ENCODE measurements at regions of chr2 and their contacts with region 1.

Region 1: GRCh38 chr2:240434728-240435456 is 571 bp upstream of the GPC1 start:
- DNase-seq: peak; percentile 94
- ATAC-seq: peak; percentile 90
- H3K4me3 Mint-ChIP-seq: peak overlapping the region; percentile 85
- H3K27ac Mint-ChIP-seq: peak overlapping the region; percentile 46
- H3K4me1 Mint-ChIP-seq: peaks cover 11% of the 10 kb centered on the region
- H3K27me3 Mint-ChIP-seq: peaks cover 11% of the 10 kb centered on the region
- CTCF ChIP-seq: no peak

Region 2: DNA sequence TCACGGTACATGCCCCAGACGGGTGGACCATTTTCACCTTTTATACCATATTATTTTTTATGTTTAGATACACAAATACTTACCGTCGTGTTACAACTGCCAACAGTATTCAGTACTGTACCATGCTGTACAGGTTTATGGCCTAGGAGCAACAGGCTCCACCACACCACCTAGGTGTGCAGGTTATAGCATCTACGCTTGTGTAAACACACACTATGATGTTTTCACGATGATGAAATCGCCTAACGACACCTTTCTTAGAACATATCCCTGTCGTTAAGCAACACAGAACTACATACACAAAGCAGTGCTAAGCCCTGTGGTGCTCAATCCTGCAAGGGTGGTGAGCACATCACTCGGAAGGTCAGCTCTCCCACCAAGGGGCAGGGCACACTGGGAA is 434.2 kb before region 1 on chr2:
- CTCF ChIA-PET with region 1: no interaction called
- POLR2A ChIA-PET with region 1: no interaction called
- intact Hi-C with region 1: no loop called
- DNase-seq: no peak
- ATAC-seq: no peak
- H3K4me3 Mint-ChIP-seq: no peak overlapping the region
- H3K27ac Mint-ChIP-seq: no peak overlapping the region
- H3K4me1 Mint-ChIP-seq: no peaks in the 10 kb centered on the region
- H3K27me3 Mint-ChIP-seq: no peaks in the 10 kb centered on the region
- CTCF ChIP-seq: no peak

Region 3: DNA sequence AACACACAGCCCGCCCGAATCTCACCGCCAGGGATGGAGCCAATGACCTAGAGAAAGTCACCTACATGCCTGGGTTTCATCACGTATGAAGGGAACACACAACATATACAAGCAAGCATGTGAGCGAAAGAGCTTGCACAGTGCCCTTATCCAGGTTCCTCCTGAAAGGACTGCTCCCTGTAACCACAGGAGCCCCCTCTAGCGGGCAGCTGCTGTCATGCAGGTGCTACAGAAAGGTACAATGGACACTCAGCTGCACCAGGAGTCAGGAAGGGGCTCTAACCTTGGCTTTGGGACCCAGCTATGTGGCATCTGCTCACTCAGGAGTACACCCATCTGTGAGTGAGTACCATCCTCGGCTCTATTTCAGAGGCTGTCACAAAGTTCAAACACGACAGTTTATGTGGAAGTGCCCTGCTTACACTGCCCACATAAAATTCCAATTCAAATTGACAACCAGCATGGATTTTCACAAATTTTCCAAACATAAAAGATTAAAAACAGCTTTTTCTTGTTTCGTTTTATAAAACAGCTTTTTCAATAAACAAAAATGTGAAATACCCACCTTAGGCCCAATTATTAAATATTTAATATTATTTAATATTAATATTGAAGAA is 413.3 kb before region 1 on chr2:
- CTCF ChIA-PET with region 1: no interaction called
- POLR2A ChIA-PET with region 1: no interaction called
- intact Hi-C with region 1: loop called (anchors 1 kb)
- DNase-seq: peak; percentile 50
- ATAC-seq: peak; percentile 23
- H3K4me3 Mint-ChIP-seq: no peak overlapping the region
- H3K27ac Mint-ChIP-seq: no peak overlapping the region
- H3K4me1 Mint-ChIP-seq: peaks cover 16% of the 10 kb centered on the region
- H3K27me3 Mint-ChIP-seq: no peaks in the 10 kb centered on the region
- CTCF ChIP-seq: no peak

Region 4: GRCh38 chr2:240136013-240136670 is 298.8 kb before region 1 on chr2 and contains the start of gene COPS9:
- CTCF ChIA-PET with region 1: no interaction called
- POLR2A ChIA-PET with region 1: no interaction called
- intact Hi-C with region 1: loop called (anchors 2 kb)
- DNase-seq: peak; percentile 87
- ATAC-seq: peak; percentile 94
- H3K4me3 Mint-ChIP-seq: peak within 1 kb of the TSS; percentile 88
- H3K27ac Mint-ChIP-seq: peak within 1 kb of the TSS; percentile 56
- H3K4me1 Mint-ChIP-seq: peaks cover 27% of the 10 kb centered on the region
- H3K27me3 Mint-ChIP-seq: peaks cover 5% of the 10 kb centered on the region
- CTCF ChIP-seq: no peak
- total RNA-seq, gene COPS9: 78.6 and 81.1 TPM in 2 replicates

Region 5: GRCh38 chr2:240232961-240233893 is 201.7 kb before region 1 on chr2:
- CTCF ChIA-PET with region 1: no interaction called
- POLR2A ChIA-PET with region 1: no interaction called
- intact Hi-C with region 1: loop called (anchors 1 kb)
- DNase-seq: peak; percentile 37
- ATAC-seq: peak; percentile 74
- H3K4me3 Mint-ChIP-seq: peak overlapping the region; percentile 35
- H3K27ac Mint-ChIP-seq: no peak overlapping the region
- H3K4me1 Mint-ChIP-seq: peaks cover 9% of the 10 kb centered on the region
- H3K27me3 Mint-ChIP-seq: peaks cover 7% of the 10 kb centered on the region
- CTCF ChIP-seq: no peak

Region 6: DNA sequence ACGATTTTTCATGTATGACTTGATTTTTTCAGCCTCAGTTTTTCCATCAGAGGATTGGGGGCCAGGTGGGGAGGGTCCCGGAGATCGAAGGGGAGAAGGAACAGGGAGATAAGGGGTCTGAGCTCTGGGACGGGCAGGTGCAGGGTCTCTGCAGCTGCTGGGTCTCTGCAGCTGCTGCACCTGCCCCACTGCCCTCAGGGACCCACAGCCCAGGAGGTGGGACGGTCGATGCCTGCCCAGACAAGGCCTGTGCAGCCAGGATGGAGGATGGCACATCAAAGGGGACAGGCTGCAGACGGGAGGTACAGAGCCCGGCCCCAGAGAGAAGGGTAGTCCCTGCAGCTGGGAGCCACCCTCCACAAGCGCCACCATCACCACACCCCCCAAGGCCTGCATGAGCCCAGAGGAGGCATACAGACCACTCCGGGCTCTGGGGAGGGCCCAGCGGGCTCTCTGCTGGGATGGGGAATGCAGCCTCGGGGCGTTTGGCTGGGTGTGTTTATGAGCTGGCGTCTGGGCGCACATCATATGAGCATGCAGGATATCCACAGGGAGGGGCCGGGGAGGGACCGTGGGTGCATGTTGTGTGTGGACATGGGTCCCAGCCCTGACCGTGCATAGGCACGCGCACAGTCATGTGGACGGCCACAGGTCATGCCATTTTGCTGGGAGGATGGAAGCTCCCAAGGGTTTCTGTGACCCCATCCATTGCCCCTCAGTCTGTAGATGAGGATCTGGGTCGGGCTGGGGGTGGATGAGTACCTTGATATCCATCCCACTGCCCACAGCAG is 34.3 kb before region 1 on chr2:
- CTCF ChIA-PET with region 1: no interaction called
- POLR2A ChIA-PET with region 1: no interaction called
- intact Hi-C with region 1: no loop called
- DNase-seq: peak; percentile 13
- ATAC-seq: no peak
- H3K4me3 Mint-ChIP-seq: no peak overlapping the region
- H3K27ac Mint-ChIP-seq: no peak overlapping the region
- H3K4me1 Mint-ChIP-seq: no peaks in the 10 kb centered on the region
- H3K27me3 Mint-ChIP-seq: peaks cover 2% of the 10 kb centered on the region
- CTCF ChIP-seq: no peak

Region 7: DNA sequence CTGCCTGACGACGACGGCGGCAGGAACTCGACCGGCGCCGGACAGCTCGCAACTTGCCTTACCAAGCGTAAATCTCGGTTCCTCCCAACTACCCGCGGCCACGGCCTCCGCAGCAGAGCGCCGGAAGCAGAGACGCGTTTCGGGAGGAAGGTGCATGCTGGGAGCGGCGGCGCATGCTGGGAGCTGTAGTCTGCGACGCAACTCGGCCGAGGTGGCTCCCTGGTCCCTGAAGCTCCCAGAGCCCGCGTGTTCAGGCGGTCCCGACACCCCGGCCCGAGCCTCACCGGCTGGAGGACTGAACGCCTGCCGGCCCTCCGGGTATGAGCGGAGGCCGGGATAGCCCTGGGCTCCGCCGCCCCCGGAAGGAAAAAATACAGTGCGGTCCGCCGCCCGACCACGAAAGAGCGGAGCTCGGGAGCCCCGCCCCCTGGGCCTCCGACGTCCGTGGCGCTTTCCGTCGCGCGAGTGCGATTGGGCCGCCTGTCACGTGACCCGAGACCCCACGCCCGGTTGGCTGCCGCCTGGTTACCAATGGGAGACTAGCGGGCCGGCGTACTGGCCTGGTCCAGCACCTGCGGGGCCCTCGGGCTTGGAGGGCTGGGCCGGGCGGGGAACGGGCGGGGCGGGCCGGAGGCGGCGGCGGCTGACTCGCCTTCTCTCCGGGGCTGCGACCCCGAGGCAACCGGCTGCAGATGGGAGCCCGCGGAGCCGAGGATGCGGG is 151.5 kb after region 1 on chr2 and contains the start of gene CAPN10:
- CTCF ChIA-PET with region 1: no interaction called
- POLR2A ChIA-PET with region 1: no interaction called
- intact Hi-C with region 1: loop called (anchors 2 kb)
- DNase-seq: peak; percentile 96
- ATAC-seq: peak; percentile 71
- H3K4me3 Mint-ChIP-seq: peak within 1 kb of the TSS; percentile 95
- H3K27ac Mint-ChIP-seq: peak within 1 kb of the TSS; percentile 96
- H3K4me1 Mint-ChIP-seq: peaks cover 58% of the 10 kb centered on the region
- H3K27me3 Mint-ChIP-seq: no peaks in the 10 kb centered on the region
- CTCF ChIP-seq: no peak
- total RNA-seq, gene CAPN10: 55.2 and 61.8 TPM in 2 replicates

Region 8: GRCh38 chr2:241009601-241010530 is 575.0 kb after region 1 on chr2:
- CTCF ChIA-PET with region 1: no interaction called
- POLR2A ChIA-PET with region 1: no interaction called
- intact Hi-C with region 1: no loop called
- DNase-seq: peak; percentile 15
- ATAC-seq: peak; percentile 21
- H3K4me3 Mint-ChIP-seq: no peak overlapping the region
- H3K27ac Mint-ChIP-seq: no peak overlapping the region
- H3K4me1 Mint-ChIP-seq: peaks cover 3% of the 10 kb centered on the region
- H3K27me3 Mint-ChIP-seq: peaks cover 10% of the 10 kb centered on the region
- CTCF ChIP-seq: no peak